ENCODE measurements at regions of chr12 and their contacts with region 1.

Region 1: DNA sequence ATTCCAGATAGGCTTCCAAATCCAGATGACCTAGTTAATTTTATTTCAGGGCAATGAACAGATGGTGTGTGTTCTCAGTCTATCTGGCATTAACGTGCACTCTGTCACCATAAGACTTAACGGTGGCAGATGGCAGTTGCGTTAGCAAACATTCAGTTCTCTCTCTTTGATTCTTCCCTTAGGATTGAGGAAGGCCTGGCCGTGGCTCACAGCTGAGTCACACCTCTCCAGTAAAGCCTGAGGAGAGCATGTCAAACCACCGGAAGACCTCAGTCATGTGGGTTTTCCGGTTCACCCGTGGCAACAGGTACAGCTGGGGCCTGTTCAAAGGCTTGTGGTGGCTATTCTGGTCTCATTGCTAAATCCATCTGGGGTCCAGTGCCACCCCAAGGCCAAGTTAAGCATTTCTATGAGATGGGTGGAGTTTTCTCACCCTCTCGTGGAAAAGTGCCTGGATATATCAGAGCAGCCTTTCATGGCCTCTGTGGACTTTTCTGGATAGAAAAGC is 545.1 kb upstream of the ATP2B1 start:
- DNase-seq: peak; percentile 59
- ATAC-seq: peak; percentile 99
- H3K4me3 ChIP-seq: no peak overlapping the region
- H3K27ac ChIP-seq: no peak overlapping the region
- H3K4me1 ChIP-seq: peaks cover 5% of the 10 kb centered on the region; the same call in 1 of the 2 replicates
- H3K27me3 ChIP-seq: no peaks in the 10 kb centered on the region
- CTCF ChIP-seq: peak; percentile 39 to 47 (median 39); a peak in 5 of 6 replicates
- EP300 ChIP-seq: peak in 1 of 2 experiments; percentile 62; a peak in 1 of 4 replicates
- POLR2A ChIP-seq: no peak
- RAD21 ChIP-seq: peak; percentile 73

Region 2: GRCh38 chr12:90102957-90103652 is 150.6 kb before region 1 on chr12:
- CTCF ChIA-PET with region 1: no interaction called
- POLR2A ChIA-PET with region 1: no interaction called
- RAD21 ChIA-PET with region 1: no interaction called
- SMC1A ChIA-PET with region 1: no interaction called
- in situ Hi-C with region 1: no loop called
- intact Hi-C with region 1: loop called (anchors 5 kb)
- DNase-seq: peak; percentile 24
- ATAC-seq: peak; percentile 98
- H3K4me3 ChIP-seq: no peak overlapping the region
- H3K27ac ChIP-seq: no peak overlapping the region
- H3K4me1 ChIP-seq: no peaks in the 10 kb centered on the region
- H3K27me3 ChIP-seq: no peaks in the 10 kb centered on the region
- CTCF ChIP-seq: peak; percentile 56 to 62 (median 57)
- EP300 ChIP-seq: no peak
- POLR2A ChIP-seq: no peak
- RAD21 ChIP-seq: peak; percentile 63

Region 3: DNA sequence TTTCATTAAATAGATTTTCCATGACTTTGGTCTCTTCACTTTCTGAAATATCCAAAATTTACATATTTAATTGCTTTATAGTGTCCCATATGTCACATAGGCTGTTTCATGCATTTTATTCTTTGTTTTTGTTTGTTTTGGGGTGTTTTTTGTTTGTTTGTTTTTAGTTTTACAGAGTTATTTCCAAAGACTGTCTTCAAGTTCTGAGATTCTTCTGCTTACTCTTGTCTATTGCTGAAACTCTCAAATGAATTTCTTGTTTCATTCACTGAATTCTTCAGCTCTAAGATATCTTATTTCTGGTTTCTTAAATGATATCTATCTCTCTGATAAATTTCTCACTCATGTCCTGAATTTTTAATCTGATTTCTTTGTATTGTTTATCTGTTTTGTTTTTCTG is 133.1 kb before region 1 on chr12:
- CTCF ChIA-PET with region 1: no interaction called
- POLR2A ChIA-PET with region 1: no interaction called
- RAD21 ChIA-PET with region 1: no interaction called
- SMC1A ChIA-PET with region 1: no interaction called
- in situ Hi-C with region 1: no loop called
- intact Hi-C with region 1: no loop called
- DNase-seq: no peak
- ATAC-seq: no peak
- H3K4me3 ChIP-seq: no peak overlapping the region
- H3K27ac ChIP-seq: no peak overlapping the region
- H3K4me1 ChIP-seq: no peaks in the 10 kb centered on the region
- H3K27me3 ChIP-seq: no peaks in the 10 kb centered on the region
- CTCF ChIP-seq: no peak
- EP300 ChIP-seq: no peak
- POLR2A ChIP-seq: no peak
- RAD21 ChIP-seq: no peak

Measured in GM12878 (cell line).